ENCODE measurements at regions of chr3 and their contacts with region 1.

Region 1: DNA sequence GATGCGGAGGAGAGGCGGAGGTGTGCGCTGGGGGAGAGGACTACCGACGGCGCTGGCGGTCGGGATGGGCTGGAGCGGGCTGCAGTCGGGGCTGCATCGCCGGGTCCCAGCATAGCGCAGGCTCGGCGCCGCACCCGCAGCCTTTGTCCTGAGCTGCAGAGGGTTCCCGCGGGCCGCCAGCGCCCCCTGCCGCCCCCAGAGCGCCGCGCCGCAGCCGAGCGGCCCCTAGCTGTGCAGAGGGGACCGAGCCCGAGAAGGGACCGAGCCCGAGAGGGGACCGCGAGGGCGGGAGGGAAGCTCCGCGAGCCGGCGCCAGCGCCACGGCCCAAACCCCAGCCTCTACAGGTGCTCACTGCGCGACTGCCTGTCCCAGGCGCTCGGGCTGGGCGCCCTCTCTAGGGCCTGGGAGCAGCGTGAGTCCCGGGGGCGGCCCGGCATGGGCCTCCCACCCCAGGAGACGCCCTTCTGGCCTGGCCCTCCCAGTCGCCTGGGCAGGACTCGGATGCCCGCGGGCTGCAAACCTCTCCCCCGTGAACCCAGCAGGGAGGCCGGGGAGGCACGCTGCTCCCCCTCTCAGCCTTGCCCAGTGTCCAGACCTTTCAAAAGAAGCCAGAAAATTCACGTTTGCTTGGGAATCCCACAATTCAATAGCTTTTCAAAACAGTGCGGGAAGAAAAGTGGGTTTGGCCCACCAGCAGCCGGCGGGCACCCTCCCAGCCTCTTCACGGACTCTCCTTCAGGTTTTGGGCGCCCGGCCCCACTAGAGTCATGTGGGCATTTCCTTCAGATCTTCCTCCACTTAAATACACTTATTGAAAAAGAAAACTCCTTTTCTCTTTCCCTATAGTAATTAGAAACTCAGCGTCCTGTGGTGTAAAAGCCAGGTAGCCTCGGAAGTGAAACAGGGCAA is 134.7 kb downstream of the TPRA1 start:
- DNase-seq: peak; percentile 93
- ATAC-seq: peak; percentile 85
- H3K4me3 Mint-ChIP-seq: peak overlapping the region; percentile 78
- H3K27ac Mint-ChIP-seq: no peak overlapping the region
- H3K4me1 Mint-ChIP-seq: peaks cover 21% of the 10 kb centered on the region
- H3K27me3 Mint-ChIP-seq: peaks cover 56% of the 10 kb centered on the region
- CTCF ChIP-seq: peak; percentile 93

Region 2: GRCh38 chr3:127158614-127159229 is 297.1 kb before region 1 on chr3:
- CTCF ChIA-PET with region 1: interaction called, 11 read pairs
- POLR2A ChIA-PET with region 1: no interaction called
- DNase-seq: peak; percentile 78
- ATAC-seq: peak; percentile 93
- H3K4me3 Mint-ChIP-seq: no peak overlapping the region
- H3K27ac Mint-ChIP-seq: no peak overlapping the region
- H3K4me1 Mint-ChIP-seq: peaks cover 13% of the 10 kb centered on the region
- H3K27me3 Mint-ChIP-seq: no peaks in the 10 kb centered on the region; the same call in none of the 2 replicates
- CTCF ChIP-seq: no peak

Region 3: DNA sequence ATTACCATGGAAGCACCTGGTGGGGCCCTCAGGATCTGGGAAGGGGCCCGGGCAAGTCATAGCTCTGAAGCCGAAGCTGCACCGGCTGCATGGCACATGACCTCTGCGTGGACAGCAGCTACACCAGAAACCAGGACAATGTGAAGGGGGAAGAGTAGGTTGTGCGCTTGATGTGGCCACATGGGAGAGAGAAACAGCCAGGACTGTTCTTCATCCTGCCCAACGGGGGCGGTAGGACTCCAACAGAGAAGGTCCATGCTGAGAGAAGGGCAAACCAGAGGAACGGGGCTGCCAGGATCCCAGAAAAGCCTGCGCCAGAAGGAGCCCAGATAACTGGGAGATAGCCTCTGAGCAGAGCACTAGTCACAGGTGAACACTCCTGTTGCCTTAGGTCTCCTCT is 113.1 kb before region 1 on chr3:
- CTCF ChIA-PET with region 1: interaction called, 11 read pairs
- POLR2A ChIA-PET with region 1: no interaction called
- DNase-seq: peak; percentile 39
- ATAC-seq: peak; percentile 92
- H3K4me3 Mint-ChIP-seq: no peak overlapping the region
- H3K27ac Mint-ChIP-seq: no peak overlapping the region
- H3K4me1 Mint-ChIP-seq: peaks cover 6% of the 10 kb centered on the region
- H3K27me3 Mint-ChIP-seq: peaks cover 11% of the 10 kb centered on the region
- CTCF ChIP-seq: 0 out of 2 replicates have a peak, but pooled peaks have one; percentile 21

Region 4: DNA sequence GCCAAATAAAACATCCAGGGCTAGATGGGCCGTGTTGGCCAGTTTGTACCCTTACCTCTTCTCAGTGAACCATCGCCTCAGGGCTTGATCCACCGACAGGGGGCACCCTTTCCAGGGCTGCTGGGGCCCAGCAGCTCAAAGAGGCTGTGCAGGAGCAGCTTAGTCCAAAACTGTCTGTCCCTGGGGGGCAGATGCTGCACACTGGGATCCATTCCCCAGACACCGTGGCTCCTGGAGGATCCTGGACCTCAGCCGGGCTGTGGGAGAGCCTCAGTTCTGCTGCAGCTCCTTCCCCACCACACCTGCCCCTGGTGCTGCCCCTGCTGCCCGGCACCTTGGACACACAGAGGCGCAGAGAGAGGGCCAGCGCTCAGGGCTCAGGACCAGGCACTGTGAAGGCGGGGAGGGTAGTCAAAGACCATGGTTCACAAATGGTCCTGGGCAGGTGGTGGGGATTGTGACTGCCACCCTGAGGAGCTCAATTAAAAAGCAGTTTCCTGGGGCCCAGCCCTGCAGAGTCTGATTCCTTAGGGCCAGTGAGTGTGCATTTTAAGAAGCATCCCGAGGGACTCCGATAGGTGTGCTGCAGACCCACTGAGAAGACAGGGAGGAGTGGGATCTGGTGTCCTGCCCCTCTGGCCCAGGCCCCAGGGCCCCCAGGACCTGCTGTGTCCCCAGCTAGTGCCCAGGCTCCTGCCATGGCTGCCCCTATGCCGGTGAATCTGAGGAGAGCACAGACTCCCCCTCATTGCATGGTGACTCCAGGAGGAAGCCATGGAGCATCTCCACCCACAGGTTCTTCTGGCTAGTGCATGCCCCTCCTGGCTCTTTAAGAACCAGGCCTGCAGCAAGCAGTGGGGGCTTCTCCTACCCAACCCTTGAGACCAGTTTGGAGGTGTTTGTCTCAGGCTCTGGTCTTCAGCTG is 81.4 kb before region 1 on chr3:
- CTCF ChIA-PET with region 1: interaction called, 47 read pairs
- POLR2A ChIA-PET with region 1: no interaction called
- DNase-seq: peak; percentile 79
- ATAC-seq: peak; percentile 77
- H3K4me3 Mint-ChIP-seq: no peak overlapping the region
- H3K27ac Mint-ChIP-seq: no peak overlapping the region
- H3K4me1 Mint-ChIP-seq: peaks cover 5% of the 10 kb centered on the region; the same call in 1 of the 2 replicates
- H3K27me3 Mint-ChIP-seq: no peaks in the 10 kb centered on the region
- CTCF ChIP-seq: peak; percentile 60

Region 5: GRCh38 chr3:127473244-127474024 is 17.6 kb after region 1 on chr3:
- CTCF ChIA-PET with region 1: interaction called, 62 read pairs
- POLR2A ChIA-PET with region 1: no interaction called
- DNase-seq: peak; percentile 87
- ATAC-seq: peak; percentile 99
- H3K4me3 Mint-ChIP-seq: no peak overlapping the region
- H3K27ac Mint-ChIP-seq: no peak overlapping the region
- H3K4me1 Mint-ChIP-seq: no peaks in the 10 kb centered on the region
- H3K27me3 Mint-ChIP-seq: no peaks in the 10 kb centered on the region; the same call in 1 of the 2 replicates
- CTCF ChIP-seq: peak; percentile 61

Measured in WTC11 (cell line).